Esophagus muscularis mucosa (tissue), 4 donors: ENCODE measurements at regions of chr4 and their contacts with region 1.

Region 1: GRCh38 chr4:143207557-143207956 is 22.8 kb downstream of the USP38 start:
- DNase-seq: no peak
- H3K4me3 ChIP-seq: no peak overlapping the region
- H3K27ac ChIP-seq: peak overlapping the region in 1 of 4 donors; percentile 24
- H3K4me1 ChIP-seq: peaks cover 0 to 24% (median 11%) of the 10 kb centered on the region in 4 donors
- H3K27me3 ChIP-seq: no peaks in the 10 kb centered on the region
- CTCF ChIP-seq: peak; percentile 54 to 61 (median 58)
- EP300 ChIP-seq: no peak
- POLR2A ChIP-seq: no peak

Region 2: GRCh38 chr4:142549726-142550463 is 657.7 kb before region 1 on chr4:
- intact Hi-C with region 1: no loop called
- DNase-seq: no peak
- H3K4me3 ChIP-seq: no peak overlapping the region
- H3K27ac ChIP-seq: no peak overlapping the region
- H3K4me1 ChIP-seq: no peaks in the 10 kb centered on the region
- H3K27me3 ChIP-seq: no peaks in the 10 kb centered on the region
- CTCF ChIP-seq: no peak
- EP300 ChIP-seq: no peak
- POLR2A ChIP-seq: no peak

Region 3: GRCh38 chr4:143482840-143483239 is 275.3 kb after region 1 on chr4:
- intact Hi-C with region 1: loop called (anchors 2 kb)
- DNase-seq: no peak
- H3K4me3 ChIP-seq: no peak overlapping the region
- H3K27ac ChIP-seq: no peak overlapping the region
- H3K4me1 ChIP-seq: peaks cover 0 to 14% (median 9%) of the 10 kb centered on the region in 4 donors
- H3K27me3 ChIP-seq: no peaks in the 10 kb centered on the region
- CTCF ChIP-seq: peak; percentile 61 to 67 (median 64)
- EP300 ChIP-seq: no peak
- POLR2A ChIP-seq: no peak

Region 4: DNA sequence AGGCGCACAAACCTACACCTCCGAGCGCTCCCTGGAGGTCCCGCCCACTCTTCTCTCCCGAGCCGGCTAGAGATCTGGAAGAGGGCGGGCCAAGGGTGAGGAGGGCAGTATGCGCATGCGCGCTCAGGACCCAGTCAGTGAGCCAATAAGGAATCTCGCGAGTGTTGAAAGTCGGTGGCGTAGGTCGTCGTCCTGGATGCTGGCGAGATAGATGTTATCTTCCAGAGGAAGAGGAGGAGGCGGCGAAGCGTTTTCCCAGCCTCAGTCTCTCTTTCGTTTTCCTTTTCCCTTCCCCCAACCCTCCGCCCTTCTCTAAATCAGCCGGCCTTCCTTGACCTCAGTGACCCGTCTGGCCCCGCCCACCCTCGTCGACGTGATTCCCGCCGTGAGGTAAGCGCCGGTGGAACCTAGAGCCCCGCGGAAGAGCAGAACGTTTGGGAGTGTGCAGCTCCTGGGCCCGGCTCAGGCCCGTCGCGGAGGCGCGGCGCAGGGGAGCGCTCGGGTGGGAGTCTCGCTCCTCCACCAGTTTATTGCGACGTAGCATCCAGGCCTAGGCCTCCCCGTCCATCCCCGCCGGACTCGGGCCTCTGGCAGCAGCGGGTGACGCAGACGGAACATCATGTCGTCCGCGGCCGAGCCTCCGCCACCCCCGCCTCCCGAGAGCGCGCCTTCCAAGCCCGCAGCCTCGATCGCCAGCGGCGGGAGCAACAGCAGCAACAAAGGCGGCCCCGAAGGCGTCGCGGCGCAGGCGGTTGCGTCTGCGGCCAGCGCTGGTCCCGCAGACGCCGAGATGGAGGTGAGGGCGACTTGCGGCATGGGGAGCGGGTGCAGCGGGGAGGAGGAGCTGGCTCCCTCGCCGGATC is 306.0 kb after region 1 on chr4 and contains the start of gene SMARCA5:
- intact Hi-C with region 1: loop called (anchors 10 kb)
- DNase-seq: peak; percentile 99
- H3K4me3 ChIP-seq: peak within 1 kb of the TSS; percentile 73 to 98 (median 84)
- H3K27ac ChIP-seq: peak within 1 kb of the TSS; percentile 95 to 99 (median 98)
- H3K4me1 ChIP-seq: peaks cover 31 to 43% (median 40%) of the 10 kb centered on the region in 4 donors
- H3K27me3 ChIP-seq: no peaks in the 10 kb centered on the region
- CTCF ChIP-seq: peak in 1 of 3 experiments; percentile 19
- EP300 ChIP-seq: no peak
- POLR2A ChIP-seq: peak; percentile 75
- total RNA-seq, gene SMARCA5: 38.0 to 59.8 (median 46.3) TPM

Region 5: DNA sequence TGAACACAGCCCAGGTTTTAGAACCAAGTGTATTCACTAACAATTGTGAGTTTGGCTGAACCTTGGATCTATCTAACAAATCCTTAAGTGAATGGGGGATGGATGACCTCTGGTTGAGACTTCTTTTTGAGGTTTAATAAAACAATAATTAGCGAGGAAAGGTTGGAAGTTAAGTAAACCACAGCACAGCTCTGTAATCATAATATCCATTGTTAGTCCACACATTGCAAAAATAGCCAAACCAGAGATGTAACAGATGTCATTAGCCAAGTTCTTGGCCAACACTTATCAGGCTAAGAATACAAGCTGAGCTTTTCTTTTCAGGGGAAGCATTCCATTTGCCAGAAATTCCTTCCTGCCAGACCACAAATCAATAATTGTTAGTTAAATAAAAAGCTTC is 433.8 kb after region 1 on chr4:
- intact Hi-C with region 1: no loop called
- DNase-seq: no peak
- H3K4me3 ChIP-seq: no peak overlapping the region
- H3K27ac ChIP-seq: no peak overlapping the region
- H3K4me1 ChIP-seq: peaks cover 0 to 9% (median 7%) of the 10 kb centered on the region in 4 donors
- H3K27me3 ChIP-seq: no peaks in the 10 kb centered on the region
- CTCF ChIP-seq: no peak
- EP300 ChIP-seq: no peak
- POLR2A ChIP-seq: no peak